ENCODE measurements at regions of chr15 and their contacts with region 1.

Region 1: DNA sequence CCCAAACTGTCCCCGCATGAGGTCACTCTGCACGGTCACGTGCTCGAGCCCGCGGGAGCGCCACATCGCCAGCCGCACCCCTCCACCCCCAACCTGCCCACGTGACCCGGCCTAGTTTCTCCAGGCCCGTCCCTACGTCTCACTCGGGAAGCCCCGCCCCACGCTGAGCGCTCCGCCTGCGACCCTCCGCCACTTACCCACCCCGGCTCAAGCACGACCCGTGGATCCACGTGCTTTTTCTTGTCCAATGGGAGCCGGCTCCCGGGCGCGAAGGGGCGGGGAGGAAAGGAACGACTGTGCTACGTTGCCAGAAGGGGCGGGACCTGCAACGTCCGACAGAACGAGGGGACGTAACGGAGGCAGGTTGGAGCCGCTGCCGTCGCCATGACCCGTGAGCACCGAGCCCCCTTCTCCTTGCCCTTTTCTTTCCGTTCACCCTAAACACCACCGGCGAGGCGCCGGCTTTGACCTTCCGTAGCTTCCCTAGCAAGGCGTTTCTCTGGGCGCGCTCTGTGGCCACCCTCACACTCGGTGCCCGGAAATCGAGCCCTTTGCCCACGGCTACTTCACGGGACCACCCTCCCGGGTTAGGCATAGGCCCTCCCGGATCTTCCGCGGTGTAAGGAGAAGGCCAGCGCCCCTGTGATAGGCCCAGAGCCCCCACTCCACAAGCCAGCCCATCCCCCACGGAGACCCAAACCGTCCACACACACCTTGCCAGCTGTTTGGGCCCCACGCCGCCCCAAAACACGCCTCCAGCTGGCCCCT is at the start of gene SERF2:
- DNase-seq: peak; percentile 99
- ATAC-seq: peak; percentile 92
- H3K4me3 ChIP-seq: peak within 1 kb of the TSS; percentile 96
- H3K27ac ChIP-seq: peak within 1 kb of the TSS; percentile 99
- H3K4me1 ChIP-seq: peaks cover 34% of the 10 kb centered on the region
- H3K27me3 ChIP-seq: no peaks in the 10 kb centered on the region
- CTCF ChIP-seq: no peak
- EP300 ChIP-seq: peak in 1 of 2 experiments; percentile 24; a peak in 1 of 4 replicates
- POLR2A ChIP-seq: peak; percentile 98
- RAD21 ChIP-seq: no peak
- polyA plus RNA-seq, gene SERF2: 4,056 to 4,159 TPM

Region 2: DNA sequence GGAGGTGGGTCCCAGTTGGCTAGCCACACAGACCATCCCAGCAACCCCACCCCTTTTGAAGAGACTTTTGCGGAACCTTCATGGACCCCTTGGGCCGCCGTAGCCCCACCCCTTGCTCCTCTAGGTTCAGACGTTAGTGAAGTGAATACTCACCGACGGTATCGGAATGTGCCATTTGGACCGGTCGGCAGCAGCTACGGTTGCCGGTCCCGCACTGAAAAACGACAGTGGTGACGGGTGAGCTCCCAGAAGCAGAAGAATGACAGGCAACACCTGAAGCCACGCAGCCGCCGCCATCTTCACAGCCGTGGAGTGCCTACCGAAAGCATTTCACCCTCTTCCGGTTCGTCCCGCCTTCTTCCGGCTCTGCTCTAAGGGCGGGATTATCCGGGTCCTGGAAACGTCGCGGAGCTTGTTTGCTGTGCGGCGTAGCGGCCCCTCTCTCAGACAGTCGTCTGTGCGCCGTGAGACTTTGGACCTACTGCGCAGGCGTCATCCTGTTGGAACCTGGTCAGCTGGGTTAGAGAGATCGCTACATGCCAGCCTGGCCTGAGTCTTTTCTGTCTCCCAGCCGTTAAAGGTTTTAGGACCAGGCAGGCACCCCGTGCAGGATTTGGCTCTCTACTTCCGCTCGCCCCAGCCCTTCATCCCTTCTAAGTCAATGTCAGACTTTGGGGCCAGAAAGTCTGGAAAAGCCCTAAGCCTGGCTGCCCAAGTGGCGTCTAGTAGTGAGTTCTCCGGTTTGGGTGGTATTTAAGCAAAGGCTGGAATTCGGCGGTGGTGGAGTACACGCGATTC is 1518.9 kb before region 1 on chr15 and contains the starts of genes GANC and TMEM87A:
- CTCF ChIA-PET with region 1: no interaction called
- POLR2A ChIA-PET with region 1: no interaction called
- RAD21 ChIA-PET with region 1: no interaction called
- SMC1A ChIA-PET with region 1: no interaction called
- in situ Hi-C with region 1: loop called (anchors 25 kb)
- intact Hi-C with region 1: no loop called
- DNase-seq: peak; percentile 95
- ATAC-seq: peak; percentile 95
- H3K4me3 ChIP-seq: peak within 1 kb of the TSS; percentile 85
- H3K27ac ChIP-seq: peak within 1 kb of the TSS; percentile 95
- H3K4me1 ChIP-seq: no peaks in the 10 kb centered on the region; the same call in 1 of the 2 replicates
- H3K27me3 ChIP-seq: no peaks in the 10 kb centered on the region
- CTCF ChIP-seq: no peak
- EP300 ChIP-seq: no peak
- POLR2A ChIP-seq: peak; percentile 99
- RAD21 ChIP-seq: no peak
- polyA plus RNA-seq, gene GANC: 11.3 to 13.1 TPM
- polyA plus RNA-seq, gene TMEM87A: 33.4 to 53.2 TPM

Region 3: DNA sequence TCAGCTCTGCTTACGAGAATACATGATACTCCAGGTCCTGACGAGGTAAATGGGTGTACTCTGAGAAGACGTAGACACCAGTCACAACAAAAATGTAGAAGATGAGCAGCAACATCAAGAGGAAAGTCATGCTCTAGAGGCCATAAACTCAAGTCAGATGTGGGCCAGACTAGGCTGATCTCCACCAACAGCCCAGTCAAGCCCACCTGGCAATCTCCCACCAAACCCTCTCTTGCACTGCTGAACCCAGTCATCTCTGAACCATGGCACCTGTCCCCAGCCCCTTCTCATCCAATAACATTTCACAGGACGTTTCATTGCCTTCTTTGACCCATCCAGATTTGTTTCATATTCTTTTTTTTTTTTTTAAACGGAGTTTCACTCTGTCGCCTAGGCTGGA is 56.8 kb before region 1 on chr15:
- CTCF ChIA-PET with region 1: no interaction called
- POLR2A ChIA-PET with region 1: interaction called, 5 read pairs
- RAD21 ChIA-PET with region 1: interaction called, 8 read pairs
- SMC1A ChIA-PET with region 1: interaction called, 3 read pairs
- in situ Hi-C with region 1: loop called (anchors 10 kb)
- intact Hi-C with region 1: no loop called
- DNase-seq: no peak
- ATAC-seq: peak; percentile 79
- H3K4me3 ChIP-seq: peak overlapping the region; percentile 63
- H3K27ac ChIP-seq: peak overlapping the region; percentile 74
- H3K4me1 ChIP-seq: no peaks in the 10 kb centered on the region
- H3K27me3 ChIP-seq: no peaks in the 10 kb centered on the region
- CTCF ChIP-seq: no peak
- EP300 ChIP-seq: no peak
- POLR2A ChIP-seq: no peak
- RAD21 ChIP-seq: no peak

Region 4: GRCh38 chr15:43776718-43777583 is 15.2 kb before region 1 on chr15 and contains the start of gene ELL3:
- CTCF ChIA-PET with region 1: interaction called, 72 read pairs
- POLR2A ChIA-PET with region 1: interaction called, 58 read pairs
- RAD21 ChIA-PET with region 1: interaction called, 54 read pairs
- SMC1A ChIA-PET with region 1: interaction called, 129 read pairs
- in situ Hi-C with region 1: no loop called
- intact Hi-C with region 1: loop called (anchors 1 kb)
- DNase-seq: peak; percentile 78
- ATAC-seq: peak; percentile 86
- H3K4me3 ChIP-seq: peak within 1 kb of the TSS; percentile 78
- H3K27ac ChIP-seq: peak within 1 kb of the TSS; percentile 91
- H3K4me1 ChIP-seq: peaks cover 16% of the 10 kb centered on the region
- H3K27me3 ChIP-seq: no peaks in the 10 kb centered on the region
- CTCF ChIP-seq: peak; percentile 74 to 78 (median 75)
- EP300 ChIP-seq: no peak; a peak in 1 of 4 replicates
- POLR2A ChIP-seq: peak; percentile 70
- RAD21 ChIP-seq: peak; percentile 31; the same call in 1 of the 2 replicates
- polyA plus RNA-seq, gene ELL3: 19.6 to 26.4 TPM

Region 5: GRCh38 chr15:43808960-43809678 is 16.9 kb after region 1 on chr15:
- CTCF ChIA-PET with region 1: interaction called, 15 read pairs
- POLR2A ChIA-PET with region 1: interaction called, 48 read pairs
- RAD21 ChIA-PET with region 1: interaction called, 17 read pairs
- SMC1A ChIA-PET with region 1: interaction called, 26 read pairs
- in situ Hi-C with region 1: no loop called
- intact Hi-C with region 1: no loop called
- DNase-seq: no peak
- ATAC-seq: peak; percentile 94
- H3K4me3 ChIP-seq: peak overlapping the region; percentile 19; the same call in 1 of the 2 replicates
- H3K27ac ChIP-seq: peak overlapping the region; percentile 59
- H3K4me1 ChIP-seq: peaks cover 26% of the 10 kb centered on the region
- H3K27me3 ChIP-seq: no peaks in the 10 kb centered on the region
- CTCF ChIP-seq: no peak
- EP300 ChIP-seq: peak; percentile 85 to 94; a peak in 3 of 4 replicates
- POLR2A ChIP-seq: no peak
- RAD21 ChIP-seq: no peak

Region 6: GRCh38 chr15:43824302-43825246 is 32.4 kb after region 1 on chr15 and contains the start of gene MFAP1:
- CTCF ChIA-PET with region 1: interaction called, 3 read pairs
- POLR2A ChIA-PET with region 1: interaction called, 59 read pairs
- RAD21 ChIA-PET with region 1: interaction called, 18 read pairs
- SMC1A ChIA-PET with region 1: interaction called, 14 read pairs
- in situ Hi-C with region 1: no loop called
- intact Hi-C with region 1: loop called (anchors 5 kb)
- DNase-seq: peak; percentile 93
- ATAC-seq: peak; percentile 78
- H3K4me3 ChIP-seq: peak within 1 kb of the TSS; percentile 78
- H3K27ac ChIP-seq: peak within 1 kb of the TSS; percentile 86
- H3K4me1 ChIP-seq: peaks cover 10% of the 10 kb centered on the region; the same call in 1 of the 2 replicates
- H3K27me3 ChIP-seq: no peaks in the 10 kb centered on the region
- CTCF ChIP-seq: no peak
- EP300 ChIP-seq: 0 out of 4 replicates have a peak, but pooled peaks of 1 of the 2 experiments have one; percentile 6
- POLR2A ChIP-seq: peak; percentile 97
- RAD21 ChIP-seq: no peak
- polyA plus RNA-seq, gene MFAP1: 34.9 to 51.6 TPM